ENCODE measurements at regions of chr22 and their contacts with region 1.

Region 1: GRCh38 chr22:19756288-19757128 is 4.1 kb upstream of the TBX1 start:
- DNase-seq: peak; percentile 38 to 74 (median 47)
- H3K4me3 ChIP-seq: peak overlapping the region; percentile 37
- H3K4me3 Mint-ChIP-seq: peak overlapping the region; percentile 52 to 81 (median 68)
- H3K27ac ChIP-seq: no peak overlapping the region
- H3K27ac Mint-ChIP-seq: no peak overlapping the region
- H3K4me1 ChIP-seq: peaks cover 30% of the 10 kb centered on the region
- H3K4me1 Mint-ChIP-seq: peaks cover 25 to 37% (median 27%) of the 10 kb centered on the region in 3 donors
- H3K27me3 ChIP-seq: peaks cover 62% of the 10 kb centered on the region
- H3K27me3 Mint-ChIP-seq: peaks cover 34 to 57% of the 10 kb centered on the region in 2 donors

Region 2: DNA sequence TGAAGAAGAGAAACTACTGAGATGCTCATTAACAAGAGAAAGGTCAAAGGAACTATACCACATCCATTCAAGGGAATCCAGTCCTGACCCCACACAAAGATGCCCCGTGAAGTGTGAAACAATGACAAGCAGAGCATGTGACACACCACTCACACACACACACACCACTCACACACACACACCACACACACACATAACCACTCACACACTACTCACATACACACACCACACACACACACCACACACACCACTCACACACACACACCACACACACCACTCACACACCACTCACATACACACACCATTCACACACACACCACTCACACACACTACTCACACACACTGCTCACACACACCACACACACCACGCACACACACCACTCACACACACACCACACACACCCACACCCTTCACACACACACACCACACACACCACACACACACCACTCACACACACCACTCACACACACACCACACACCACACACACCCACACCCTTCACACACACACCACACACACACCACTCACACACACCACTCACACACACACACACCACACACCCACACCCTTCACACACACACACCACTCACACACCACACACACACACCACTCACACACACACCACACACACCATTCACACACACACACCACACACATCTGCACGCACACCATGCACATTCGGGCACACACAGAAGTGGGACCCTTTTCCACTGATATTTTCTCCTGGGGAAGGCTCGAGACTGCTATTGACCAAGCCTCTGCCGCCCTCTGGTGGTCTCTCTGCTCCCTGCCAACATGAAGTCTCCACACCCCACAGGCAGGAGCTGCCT is 153.1 kb after region 1 on chr22:
- CTCF ChIA-PET with region 1: interaction called, 11 read pairs
- POLR2A ChIA-PET with region 1: no interaction called
- DNase-seq: peak; percentile 65 to 85 (median 76)
- H3K4me3 ChIP-seq: no peak overlapping the region
- H3K4me3 Mint-ChIP-seq: peak overlapping the region in 1 of 7 donors; percentile 57
- H3K27ac ChIP-seq: no peak overlapping the region
- H3K27ac Mint-ChIP-seq: peak overlapping the region in 5 of 8 donors; percentile 12 to 96 (median 87)
- H3K4me1 ChIP-seq: peaks cover 6% of the 10 kb centered on the region
- H3K4me1 Mint-ChIP-seq: peaks cover 1 to 8% (median 4%) of the 10 kb centered on the region in 3 donors
- H3K27me3 ChIP-seq: no peaks in the 10 kb centered on the region
- H3K27me3 Mint-ChIP-seq: no peaks in the 10 kb centered on the region